ENCODE measurements at regions of chr17 and their contacts with region 1.

Region 1: DNA sequence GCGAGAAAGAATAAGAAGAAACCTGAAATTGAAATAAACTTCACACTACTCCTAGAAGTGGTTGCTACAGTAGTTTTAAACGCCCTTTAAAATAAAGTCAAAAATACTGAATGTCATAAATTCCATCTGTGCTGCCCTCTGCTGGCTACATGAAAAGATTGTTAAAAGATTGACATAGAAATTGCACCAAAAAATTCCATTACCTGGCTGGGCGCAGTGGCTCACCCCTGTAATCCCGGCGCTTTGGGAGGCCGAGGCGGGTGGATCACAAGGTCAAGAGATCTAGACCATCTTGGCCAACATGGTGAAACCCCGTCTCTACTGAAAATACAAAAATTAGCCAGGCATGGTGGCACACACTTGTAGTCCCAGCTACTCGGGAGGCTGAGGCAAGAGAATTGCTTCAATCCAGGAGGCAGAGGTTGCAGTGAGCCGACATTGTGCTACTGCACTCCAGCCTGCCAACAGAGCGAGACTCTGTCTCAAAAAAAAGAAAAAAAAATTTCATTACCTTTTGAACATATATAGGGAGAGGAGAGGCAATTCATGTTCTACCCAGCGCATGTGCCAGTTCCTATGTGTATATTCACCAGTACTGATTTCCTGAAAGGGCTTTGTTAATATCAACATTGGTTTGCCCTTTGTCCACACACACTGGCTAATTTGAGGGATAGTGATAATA is 36.5 kb downstream of the CYTH1 start:
- DNase-seq: peak; percentile 49
- ATAC-seq: peak; percentile 42; the same call in 1 of the 2 replicates
- H3K4me3 ChIP-seq: no peak overlapping the region
- H3K27ac ChIP-seq: no peak overlapping the region
- H3K4me1 ChIP-seq: peaks cover 9% of the 10 kb centered on the region
- H3K27me3 ChIP-seq: no peaks in the 10 kb centered on the region
- CTCF ChIP-seq: peak; percentile 56
- POLR2A ChIP-seq: no peak
- RAD21 ChIP-seq: peak; percentile 35

Region 2: DNA sequence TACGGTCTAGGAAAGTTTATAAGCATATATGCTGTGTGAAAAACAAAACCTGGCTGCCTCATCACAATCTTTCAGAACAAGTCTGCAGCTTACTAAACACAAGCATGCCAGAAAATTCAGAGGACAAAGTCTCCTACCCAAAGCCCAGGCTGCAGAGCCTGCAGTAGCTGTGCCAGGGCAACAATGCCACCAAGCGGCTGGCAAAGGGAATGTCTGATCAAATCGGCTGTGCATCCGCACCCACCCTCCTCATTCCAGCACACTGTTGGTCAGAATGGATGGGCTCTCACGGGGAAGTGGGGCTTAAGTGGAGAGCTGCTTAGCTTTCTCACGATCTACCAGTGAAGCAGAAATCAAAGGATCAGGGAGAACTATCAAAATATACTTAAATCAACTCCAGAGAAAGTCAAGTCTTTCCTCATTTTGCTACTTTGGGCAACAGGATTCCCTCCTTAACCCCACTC is 37.0 kb before region 1 on chr17:
- CTCF ChIA-PET with region 1: no interaction called
- POLR2A ChIA-PET with region 1: no interaction called
- dilution Hi-C with region 1: no loop called
- in situ Hi-C with region 1: no loop called
- intact Hi-C with region 1: loop called (anchors 2 kb)
- DNase-seq: peak; percentile 83
- ATAC-seq: peak; percentile 98
- H3K4me3 ChIP-seq: no peak overlapping the region
- H3K27ac ChIP-seq: no peak overlapping the region
- H3K4me1 ChIP-seq: peaks cover 4% of the 10 kb centered on the region; the same call in 1 of the 2 replicates
- H3K27me3 ChIP-seq: no peaks in the 10 kb centered on the region
- CTCF ChIP-seq: peak; percentile 93
- POLR2A ChIP-seq: no peak
- RAD21 ChIP-seq: peak; percentile 99

Region 3: DNA sequence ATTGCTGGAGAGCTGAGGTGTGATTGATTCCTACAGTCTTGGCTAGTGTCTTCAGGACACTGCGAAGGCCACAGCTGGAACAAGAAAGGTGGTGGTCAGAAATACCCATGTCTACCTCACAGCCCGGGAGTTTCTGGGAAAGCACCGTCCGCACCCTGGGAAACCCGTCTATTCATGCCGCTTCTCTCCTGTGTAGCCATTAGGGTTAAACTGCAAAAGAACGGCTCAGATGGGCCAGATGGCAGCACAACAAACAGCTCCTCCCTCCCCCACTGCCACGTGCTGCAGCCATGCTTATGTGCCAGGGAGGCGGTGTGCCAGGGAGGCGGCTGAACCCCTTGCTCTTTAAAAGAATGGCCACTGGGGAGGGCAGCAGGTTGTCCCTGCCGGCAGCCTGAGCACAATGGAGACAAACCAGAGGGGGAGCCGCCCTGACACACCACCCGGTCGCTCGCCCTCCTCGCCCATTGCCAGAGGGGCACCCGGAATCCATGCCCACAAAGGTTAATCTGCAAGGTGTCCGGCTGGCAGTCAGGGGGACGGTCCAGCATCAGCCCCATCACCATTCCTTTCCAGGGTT is 28.6 kb before region 1 on chr17:
- CTCF ChIA-PET with region 1: no interaction called
- POLR2A ChIA-PET with region 1: interaction called, 10 read pairs
- dilution Hi-C with region 1: no loop called
- in situ Hi-C with region 1: no loop called
- intact Hi-C with region 1: no loop called
- DNase-seq: peak; percentile 22
- ATAC-seq: peak; percentile 77
- H3K4me3 ChIP-seq: peak overlapping the region; percentile 34
- H3K27ac ChIP-seq: no peak overlapping the region
- H3K4me1 ChIP-seq: peaks cover 9% of the 10 kb centered on the region
- H3K27me3 ChIP-seq: no peaks in the 10 kb centered on the region
- CTCF ChIP-seq: no peak
- POLR2A ChIP-seq: no peak
- RAD21 ChIP-seq: no peak